Panc1 (cell line): ENCODE measurements at regions of chr6 and their contacts with region 1.

Region 1: GRCh38 chr6:168132531-168133167 is 53.6 kb upstream of the FRMD1 start:
- DNase-seq: no peak
- ATAC-seq: peak; percentile 90
- H3K4me3 ChIP-seq: peak overlapping the region in 1 of 2 experiments; percentile 1; a peak in 1 of 4 replicates
- H3K27ac ChIP-seq: no peak overlapping the region
- H3K4me1 ChIP-seq: peaks cover 7% of the 10 kb centered on the region
- H3K27me3 ChIP-seq: no peaks in the 10 kb centered on the region
- CTCF ChIP-seq: no peak; the same call in 1 of the 2 replicates

Region 2: DNA sequence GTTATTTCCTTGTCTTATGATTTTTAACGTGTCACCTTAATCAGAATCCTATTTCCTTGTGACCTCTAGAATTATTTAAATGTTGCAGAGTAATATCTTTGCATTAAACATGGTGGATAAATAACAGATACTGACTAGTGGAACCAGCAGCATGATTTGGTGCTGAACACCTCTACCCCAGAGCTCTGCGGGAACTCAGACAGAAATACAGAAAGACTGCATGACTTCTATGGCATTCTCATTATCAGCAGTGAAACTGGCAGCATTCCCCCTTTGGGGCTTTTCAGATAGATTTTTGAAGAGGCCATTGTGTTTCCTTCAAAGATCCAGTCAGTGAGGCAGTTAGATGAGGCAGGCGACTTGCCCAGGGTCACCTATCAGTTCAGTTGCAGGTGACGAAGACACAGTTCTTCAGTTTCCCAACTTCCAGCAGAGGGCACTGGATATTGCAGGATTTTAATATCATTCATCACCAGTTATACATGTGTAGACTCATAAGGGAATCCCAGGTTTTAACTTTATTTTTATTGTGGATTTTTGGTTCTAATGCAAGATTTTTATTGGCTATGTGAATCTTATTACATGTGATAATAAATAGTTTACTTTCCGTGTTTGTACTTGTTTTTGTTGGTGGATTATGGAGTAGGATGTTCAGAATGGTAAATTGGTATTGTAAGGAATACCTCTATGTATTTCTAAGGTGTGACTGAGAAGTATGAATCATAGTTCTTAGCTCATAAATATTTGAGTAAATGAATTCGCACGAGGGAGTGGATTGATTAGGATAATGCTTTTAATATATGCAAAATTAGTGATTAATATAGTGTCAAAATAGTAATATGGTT is 224.6 kb before region 1 on chr6:
- CTCF ChIA-PET with region 1: interaction called, 3 read pairs
- POLR2A ChIA-PET with region 1: no interaction called
- in situ Hi-C with region 1: no loop called
- intact Hi-C with region 1: loop called (anchors 5 kb)
- DNase-seq: no peak
- ATAC-seq: peak; percentile 93
- H3K4me3 ChIP-seq: no peak overlapping the region
- H3K27ac ChIP-seq: no peak overlapping the region
- H3K4me1 ChIP-seq: no peaks in the 10 kb centered on the region
- H3K27me3 ChIP-seq: no peaks in the 10 kb centered on the region
- CTCF ChIP-seq: peak; percentile 85

Region 3: DNA sequence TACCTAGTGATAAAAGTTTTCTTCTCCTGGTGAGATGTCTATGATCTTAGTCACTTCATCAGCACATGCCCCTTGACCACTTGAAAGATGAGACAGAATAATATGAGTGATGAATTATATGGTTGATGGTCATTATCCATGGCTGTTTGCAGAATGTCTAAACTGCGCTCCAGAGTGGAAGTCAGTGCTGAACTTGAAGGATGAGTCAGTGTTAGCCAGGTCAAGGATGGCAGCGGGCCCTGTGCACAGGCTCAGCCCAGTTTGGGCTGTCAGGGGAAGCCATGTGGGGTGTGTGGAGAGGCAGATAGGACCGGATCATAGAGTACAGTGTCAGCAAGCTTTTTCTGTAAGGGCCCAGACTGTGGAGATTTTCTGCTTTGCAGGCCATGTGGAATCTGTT is 202.4 kb before region 1 on chr6:
- CTCF ChIA-PET with region 1: no interaction called
- POLR2A ChIA-PET with region 1: interaction called, 12 read pairs
- in situ Hi-C with region 1: no loop called
- intact Hi-C with region 1: no loop called
- DNase-seq: no peak
- ATAC-seq: no peak; the same call in 1 of the 2 replicates
- H3K4me3 ChIP-seq: no peak overlapping the region
- H3K27ac ChIP-seq: no peak overlapping the region
- H3K4me1 ChIP-seq: no peaks in the 10 kb centered on the region
- H3K27me3 ChIP-seq: no peaks in the 10 kb centered on the region
- CTCF ChIP-seq: no peak

Region 4: GRCh38 chr6:168060521-168060931 is 72.1 kb before region 1 on chr6:
- CTCF ChIA-PET with region 1: interaction called, 6 read pairs
- POLR2A ChIA-PET with region 1: no interaction called
- in situ Hi-C with region 1: no loop called
- intact Hi-C with region 1: loop called (anchors 5 kb)
- DNase-seq: no peak
- ATAC-seq: peak; percentile 73
- H3K4me3 ChIP-seq: no peak overlapping the region
- H3K27ac ChIP-seq: no peak overlapping the region
- H3K4me1 ChIP-seq: no peaks in the 10 kb centered on the region
- H3K27me3 ChIP-seq: no peaks in the 10 kb centered on the region
- CTCF ChIP-seq: peak; percentile 86; the same call in 1 of the 2 replicates